PC-3 (cell line): ENCODE measurements at regions of chr7 and their contacts with region 1.

Region 1: GRCh38 chr7:6212008-6212407 is 60.4 kb downstream of the CYTH3 start:
- DNase-seq: no peak
- ATAC-seq: no peak
- H3K4me3 ChIP-seq: no peak overlapping the region
- H3K27ac ChIP-seq: no peak overlapping the region
- H3K4me1 ChIP-seq: no peaks in the 10 kb centered on the region
- H3K27me3 ChIP-seq: no peaks in the 10 kb centered on the region
- CTCF ChIP-seq: no peak

Region 2: DNA sequence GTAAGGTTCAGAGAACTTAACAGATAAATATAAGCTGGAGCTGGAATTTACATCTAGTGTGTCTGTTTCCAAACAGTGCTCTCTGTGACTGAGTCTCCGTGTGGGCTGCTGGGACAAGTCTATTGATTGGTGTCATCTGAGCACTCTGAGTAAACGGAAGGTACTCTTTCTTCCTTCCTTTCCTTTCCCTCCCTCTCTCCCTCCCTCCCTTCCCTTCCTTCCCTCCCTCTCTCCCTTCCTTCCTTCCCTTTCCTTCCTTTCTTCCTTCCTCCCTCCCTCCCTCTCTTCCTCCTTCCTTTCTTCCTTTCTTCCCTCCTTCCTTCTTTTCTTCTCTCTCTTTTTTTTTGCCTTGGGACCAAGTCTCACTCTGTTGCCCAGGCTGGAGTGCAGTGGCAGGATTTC is 119.1 kb before region 1 on chr7:
- CTCF ChIA-PET with region 1: no interaction called
- POLR2A ChIA-PET with region 1: interaction called, 21 read pairs
- intact Hi-C with region 1: no loop called
- DNase-seq: no peak
- ATAC-seq: peak; percentile 84
- H3K4me3 ChIP-seq: no peak overlapping the region
- H3K27ac ChIP-seq: no peak overlapping the region
- H3K4me1 ChIP-seq: no peaks in the 10 kb centered on the region
- H3K27me3 ChIP-seq: no peaks in the 10 kb centered on the region
- CTCF ChIP-seq: no peak

Region 3: DNA sequence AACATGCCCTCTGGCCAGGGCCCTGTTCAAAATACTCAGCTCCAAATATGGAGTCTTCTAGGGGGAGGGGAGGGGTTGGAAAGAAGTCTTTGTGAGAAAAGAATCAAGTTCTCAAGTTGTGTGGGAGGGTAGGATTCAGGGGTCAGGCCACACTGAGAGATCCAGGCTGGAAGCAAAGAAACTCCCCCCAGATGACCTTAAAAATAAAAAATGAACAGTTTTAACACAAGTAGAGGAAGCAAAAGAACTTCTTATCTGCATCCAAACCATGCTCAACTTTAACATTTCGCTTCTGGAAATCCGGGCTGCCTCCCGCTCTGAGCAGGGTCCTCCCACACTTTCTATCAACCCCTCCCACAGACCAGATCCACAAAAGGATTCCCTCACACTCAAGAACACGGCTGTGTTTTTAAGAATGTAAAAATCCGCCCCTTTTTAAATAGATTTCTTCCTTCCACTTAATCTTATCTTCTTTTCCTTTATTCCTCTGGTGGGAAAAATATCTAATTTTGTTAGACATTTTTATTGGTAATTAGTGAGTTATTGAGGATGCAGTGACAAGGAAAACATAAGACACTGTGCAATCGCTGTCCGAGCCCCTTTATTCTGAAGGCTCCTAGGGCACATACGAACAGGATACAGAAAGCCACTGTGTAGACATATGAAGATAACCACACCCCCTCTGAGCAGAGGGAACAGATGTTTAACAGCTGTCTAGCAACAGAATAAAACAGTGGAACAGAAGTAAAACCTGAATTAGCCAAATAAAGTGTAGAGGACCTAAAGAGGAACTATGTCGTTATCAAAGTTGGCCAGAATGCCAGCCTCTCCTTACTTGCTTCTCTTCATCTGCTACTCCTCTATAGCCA is 16.6 kb after region 1 on chr7:
- CTCF ChIA-PET with region 1: no interaction called
- POLR2A ChIA-PET with region 1: no interaction called
- intact Hi-C with region 1: no loop called
- DNase-seq: no peak
- ATAC-seq: no peak
- H3K4me3 ChIP-seq: no peak overlapping the region
- H3K27ac ChIP-seq: no peak overlapping the region
- H3K4me1 ChIP-seq: no peaks in the 10 kb centered on the region
- H3K27me3 ChIP-seq: no peaks in the 10 kb centered on the region
- CTCF ChIP-seq: no peak